Aorta (tissue), 5 donors: ENCODE measurements at regions of chr7 and their contacts with region 1.

Region 1: GRCh38 chr7:117741962-117742361 is 131.3 kb downstream of the CTTNBP2 start:
- DNase-seq: no peak
- ATAC-seq: no peak
- H3K4me3 ChIP-seq: no peak overlapping the region
- H3K27ac ChIP-seq: no peak overlapping the region
- H3K4me1 ChIP-seq: no peaks in the 10 kb centered on the region
- H3K27me3 ChIP-seq: no peaks in the 10 kb centered on the region

Region 2: DNA sequence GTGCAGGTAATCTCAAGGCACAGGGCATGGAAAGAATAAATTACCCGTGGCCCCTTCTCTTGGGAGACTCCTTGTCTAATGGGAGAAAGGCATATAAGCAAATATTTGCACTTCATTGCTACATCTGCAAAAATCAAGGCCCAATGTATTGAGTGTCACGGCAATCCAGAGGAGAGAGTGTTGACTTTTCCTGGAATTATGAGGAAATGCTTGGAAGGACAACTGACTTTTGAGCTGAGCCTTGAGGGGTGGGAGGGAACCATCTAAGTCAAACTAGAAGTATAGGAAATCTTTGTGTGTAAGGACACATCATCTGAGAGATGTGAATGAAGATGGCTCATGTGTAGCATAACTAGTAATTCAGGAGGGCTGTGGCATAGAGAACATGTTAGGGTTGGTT is 196.2 kb after region 1 on chr7:
- intact Hi-C with region 1: loop called in 1 of 2 experiments (anchors 10 kb)
- DNase-seq: no peak
- ATAC-seq: no peak
- H3K4me3 ChIP-seq: no peak overlapping the region
- H3K27ac ChIP-seq: no peak overlapping the region
- H3K4me1 ChIP-seq: no peaks in the 10 kb centered on the region
- H3K27me3 ChIP-seq: no peaks in the 10 kb centered on the region